Vagina (tissue), 2 donors: ENCODE measurements at regions of chr10 and their contacts with region 1.

Region 1: GRCh38 chr10:76270464-76270863 is 839.0 kb downstream of the LRMDA start:
- DNase-seq: no peak
- H3K4me3 ChIP-seq: no peak overlapping the region
- H3K27ac ChIP-seq: no peak overlapping the region
- H3K4me1 ChIP-seq: no peaks in the 10 kb centered on the region
- H3K27me3 ChIP-seq: no peaks in the 10 kb centered on the region
- CTCF ChIP-seq: no peak
- POLR2A ChIP-seq: no peak

Region 2: DNA sequence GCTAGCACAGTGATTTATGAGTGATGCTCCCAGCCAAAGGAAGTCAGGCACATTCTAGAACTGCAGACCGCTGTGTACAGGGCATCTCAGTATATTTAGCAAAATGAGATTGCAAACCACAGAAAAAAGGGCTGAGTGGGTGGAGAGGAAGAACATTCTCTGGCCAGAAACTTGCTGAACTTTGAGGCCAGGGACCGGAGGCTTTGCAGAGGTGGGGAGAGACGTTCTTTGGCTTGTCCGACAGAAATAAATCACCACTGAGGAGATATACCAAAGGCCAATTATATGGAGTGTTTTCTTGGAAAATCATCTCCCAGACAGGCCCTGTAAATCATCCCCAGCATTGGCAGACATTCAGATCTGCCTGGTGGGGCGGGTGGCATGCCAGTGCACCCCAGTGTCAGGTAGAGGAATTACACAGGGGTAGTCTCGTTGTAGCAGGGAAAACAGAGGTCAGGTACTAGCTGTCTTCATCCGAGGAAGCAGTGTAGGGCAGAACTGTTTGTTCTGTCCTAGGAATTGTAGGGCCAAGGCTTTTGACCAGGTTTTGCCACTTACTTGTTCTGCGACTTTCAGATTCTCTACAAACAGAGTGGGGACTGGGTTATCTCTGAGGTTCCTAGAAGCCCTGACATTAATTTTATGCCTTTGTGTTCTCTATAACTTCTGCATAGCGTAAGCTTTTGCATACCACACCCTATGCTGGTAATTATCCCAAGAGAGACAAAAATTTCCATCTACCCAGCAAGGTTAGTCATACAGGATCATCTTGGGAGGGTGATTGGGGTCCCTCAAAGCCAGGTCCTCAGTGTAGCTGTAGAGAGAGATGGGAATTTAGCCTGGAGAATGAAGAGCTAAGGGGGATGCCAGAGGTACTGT is 183.5 kb before region 1 on chr10:
- intact Hi-C with region 1: no loop called
- DNase-seq: no peak
- H3K4me3 ChIP-seq: no peak overlapping the region
- H3K27ac ChIP-seq: peak overlapping the region; percentile 16
- H3K4me1 ChIP-seq: peaks cover 8% of the 10 kb centered on the region
- H3K27me3 ChIP-seq: no peaks in the 10 kb centered on the region
- CTCF ChIP-seq: peak in 2 of 3 experiments; percentile 26 to 27
- POLR2A ChIP-seq: no peak

Region 3: GRCh38 chr10:76303682-76304316 is 33.3 kb after region 1 on chr10:
- intact Hi-C with region 1: no loop called
- DNase-seq: no peak
- H3K4me3 ChIP-seq: no peak overlapping the region
- H3K27ac ChIP-seq: no peak overlapping the region
- H3K4me1 ChIP-seq: no peaks in the 10 kb centered on the region
- H3K27me3 ChIP-seq: no peaks in the 10 kb centered on the region
- CTCF ChIP-seq: peak in 1 of 3 experiments; percentile 35
- POLR2A ChIP-seq: no peak

Region 4: GRCh38 chr10:77832238-77832637 is 1561.8 kb after region 1 on chr10:
- intact Hi-C with region 1: loop called (anchors 5 kb)
- DNase-seq: no peak
- H3K4me3 ChIP-seq: no peak overlapping the region
- H3K27ac ChIP-seq: no peak overlapping the region
- H3K4me1 ChIP-seq: no peaks in the 10 kb centered on the region
- H3K27me3 ChIP-seq: no peaks in the 10 kb centered on the region
- CTCF ChIP-seq: no peak
- POLR2A ChIP-seq: no peak